ENCODE measurements at regions of chr18 and their contacts with region 1.

Region 1: GRCh38 chr18:51824746-51825145 is 515.3 kb upstream of the DCC start:
- DNase-seq: no peak
- ATAC-seq: no peak
- H3K4me3 ChIP-seq: no peak overlapping the region
- H3K4me3 Mint-ChIP-seq: no peak overlapping the region
- H3K27ac ChIP-seq: no peak overlapping the region
- H3K27ac Mint-ChIP-seq: no peak overlapping the region
- H3K4me1 ChIP-seq: no peaks in the 10 kb centered on the region
- H3K4me1 Mint-ChIP-seq: no peaks in the 10 kb centered on the region
- H3K27me3 ChIP-seq: no peaks in the 10 kb centered on the region
- H3K27me3 Mint-ChIP-seq: no peaks in the 10 kb centered on the region
- CTCF ChIP-seq: no peak

Region 2: DNA sequence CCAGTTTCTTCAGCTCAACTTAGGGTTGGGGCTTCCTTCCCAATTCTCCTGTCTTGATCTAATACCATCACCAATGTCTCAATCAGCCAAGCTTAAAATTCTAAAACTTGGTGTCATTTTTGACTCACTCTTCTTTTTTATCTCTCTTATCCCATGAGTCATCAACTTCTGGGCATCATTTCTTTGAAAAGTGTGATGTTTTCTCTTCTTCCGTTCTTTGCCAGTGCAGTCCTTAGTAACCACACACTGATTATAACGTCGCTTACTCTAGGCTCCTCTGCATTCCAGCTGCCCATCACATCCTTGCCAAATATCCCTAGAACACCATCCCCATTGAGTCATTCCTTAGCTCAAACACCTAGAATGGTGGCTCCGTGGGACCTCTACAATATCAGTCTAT is 977.6 kb before region 1 on chr18:
- CTCF ChIA-PET with region 1: no interaction called
- POLR2A ChIA-PET with region 1: no interaction called
- intact Hi-C with region 1: loop called in 1 of 2 experiments (anchors 10 kb)
- DNase-seq: no peak
- ATAC-seq: no peak
- H3K4me3 ChIP-seq: no peak overlapping the region
- H3K4me3 Mint-ChIP-seq: no peak overlapping the region
- H3K27ac ChIP-seq: no peak overlapping the region
- H3K27ac Mint-ChIP-seq: no peak overlapping the region
- H3K4me1 ChIP-seq: no peaks in the 10 kb centered on the region
- H3K4me1 Mint-ChIP-seq: no peaks in the 10 kb centered on the region
- H3K27me3 ChIP-seq: no peaks in the 10 kb centered on the region
- H3K27me3 Mint-ChIP-seq: peaks cover 2% of the 10 kb centered on the region
- CTCF ChIP-seq: no peak

Region 3: GRCh38 chr18:51778115-51778514 is 46.6 kb before region 1 on chr18:
- CTCF ChIA-PET with region 1: no interaction called
- POLR2A ChIA-PET with region 1: no interaction called
- intact Hi-C with region 1: loop called in 1 of 2 experiments (anchors 10 kb)
- DNase-seq: no peak
- ATAC-seq: no peak
- H3K4me3 ChIP-seq: no peak overlapping the region
- H3K4me3 Mint-ChIP-seq: no peak overlapping the region
- H3K27ac ChIP-seq: no peak overlapping the region
- H3K27ac Mint-ChIP-seq: no peak overlapping the region
- H3K4me1 ChIP-seq: no peaks in the 10 kb centered on the region
- H3K4me1 Mint-ChIP-seq: no peaks in the 10 kb centered on the region
- H3K27me3 ChIP-seq: no peaks in the 10 kb centered on the region
- H3K27me3 Mint-ChIP-seq: no peaks in the 10 kb centered on the region
- CTCF ChIP-seq: no peak

Region 4: DNA sequence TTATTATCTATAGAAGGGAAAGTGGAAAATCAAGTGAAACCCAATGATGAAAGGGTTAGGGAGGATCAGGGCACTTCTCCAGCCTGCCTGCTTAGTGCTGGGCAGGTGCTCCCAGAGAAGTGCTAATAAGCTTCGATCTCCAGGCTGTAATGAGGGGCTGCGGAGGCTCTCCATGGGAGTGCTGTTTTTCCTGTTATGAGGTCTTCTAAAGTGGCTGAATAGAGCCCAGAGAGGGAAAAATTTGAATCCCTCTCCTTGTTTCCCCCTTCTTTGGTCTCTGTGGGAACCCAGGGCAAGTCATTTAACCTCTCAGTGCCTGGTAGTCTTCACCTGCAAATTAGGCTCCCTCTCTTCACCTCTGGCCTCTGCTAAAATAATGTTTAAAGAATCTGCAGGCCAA is 163.5 kb after region 1 on chr18:
- CTCF ChIA-PET with region 1: no interaction called
- POLR2A ChIA-PET with region 1: no interaction called
- intact Hi-C with region 1: no loop called
- DNase-seq: no peak
- ATAC-seq: no peak
- H3K4me3 ChIP-seq: no peak overlapping the region
- H3K4me3 Mint-ChIP-seq: no peak overlapping the region
- H3K27ac ChIP-seq: no peak overlapping the region
- H3K27ac Mint-ChIP-seq: no peak overlapping the region
- H3K4me1 ChIP-seq: no peaks in the 10 kb centered on the region
- H3K4me1 Mint-ChIP-seq: no peaks in the 10 kb centered on the region
- H3K27me3 ChIP-seq: no peaks in the 10 kb centered on the region
- H3K27me3 Mint-ChIP-seq: no peaks in the 10 kb centered on the region
- CTCF ChIP-seq: no peak

Measured in CD8-positive, alpha-beta T cell (primary cell).